ENCODE measurements at regions of chr1 and their contacts with region 1.

Region 1: GRCh38 chr1:76084029-76084627 is 9.6 kb downstream of the ST6GALNAC3 start:
- DNase-seq: no peak
- H3K4me3 ChIP-seq: no peak overlapping the region
- H3K27ac ChIP-seq: no peak overlapping the region
- H3K4me1 ChIP-seq: no peaks in the 10 kb centered on the region
- H3K27me3 ChIP-seq: no peaks in the 10 kb centered on the region
- CTCF ChIP-seq: no peak
- POLR2A ChIP-seq: no peak

Region 2: GRCh38 chr1:76135835-76136234 is 51.7 kb after region 1 on chr1:
- intact Hi-C with region 1: loop called (anchors 2 kb)
- DNase-seq: no peak
- H3K4me3 ChIP-seq: no peak overlapping the region
- H3K27ac ChIP-seq: no peak overlapping the region
- H3K4me1 ChIP-seq: no peaks in the 10 kb centered on the region
- H3K27me3 ChIP-seq: no peaks in the 10 kb centered on the region
- CTCF ChIP-seq: no peak
- POLR2A ChIP-seq: no peak

Region 3: DNA sequence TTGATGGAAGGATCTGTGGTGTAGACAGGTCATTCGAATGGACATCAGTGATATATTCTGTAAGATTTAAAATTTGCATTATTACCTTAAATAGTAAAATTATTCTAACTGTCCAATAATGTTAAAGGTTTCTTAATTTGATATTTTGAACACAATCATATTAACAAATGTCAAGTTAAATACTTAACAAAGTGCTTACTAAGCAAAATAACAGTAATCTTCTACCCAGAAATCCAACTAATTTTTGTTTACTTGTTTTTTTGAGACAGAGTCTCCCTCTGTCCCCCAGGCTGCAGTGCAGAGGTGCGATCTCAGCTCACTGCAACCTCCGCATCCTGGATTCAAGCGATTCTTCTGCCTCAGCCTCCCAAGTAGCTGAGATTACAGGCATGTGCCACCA is 1641.6 kb after region 1 on chr1:
- intact Hi-C with region 1: no loop called
- DNase-seq: no peak
- H3K4me3 ChIP-seq: no peak overlapping the region
- H3K27ac ChIP-seq: no peak overlapping the region
- H3K4me1 ChIP-seq: no peaks in the 10 kb centered on the region
- H3K27me3 ChIP-seq: no peaks in the 10 kb centered on the region
- CTCF ChIP-seq: no peak
- POLR2A ChIP-seq: no peak